ENCODE measurements at regions of chr12 and their contacts with region 1.

Region 1: GRCh38 chr12:24270965-24271364 is 321.5 kb upstream of the SOX5 start:
- H3K4me3 Mint-ChIP-seq: no peak overlapping the region
- H3K27ac Mint-ChIP-seq: no peak overlapping the region
- H3K4me1 Mint-ChIP-seq: no peaks in the 10 kb centered on the region
- H3K27me3 Mint-ChIP-seq: no peaks in the 10 kb centered on the region

Region 2: GRCh38 chr12:23648546-23648945 is 622.4 kb before region 1 on chr12:
- intact Hi-C with region 1: no loop called
- H3K4me3 Mint-ChIP-seq: no peak overlapping the region
- H3K27ac Mint-ChIP-seq: no peak overlapping the region
- H3K4me1 Mint-ChIP-seq: no peaks in the 10 kb centered on the region
- H3K27me3 Mint-ChIP-seq: no peaks in the 10 kb centered on the region

Region 3: DNA sequence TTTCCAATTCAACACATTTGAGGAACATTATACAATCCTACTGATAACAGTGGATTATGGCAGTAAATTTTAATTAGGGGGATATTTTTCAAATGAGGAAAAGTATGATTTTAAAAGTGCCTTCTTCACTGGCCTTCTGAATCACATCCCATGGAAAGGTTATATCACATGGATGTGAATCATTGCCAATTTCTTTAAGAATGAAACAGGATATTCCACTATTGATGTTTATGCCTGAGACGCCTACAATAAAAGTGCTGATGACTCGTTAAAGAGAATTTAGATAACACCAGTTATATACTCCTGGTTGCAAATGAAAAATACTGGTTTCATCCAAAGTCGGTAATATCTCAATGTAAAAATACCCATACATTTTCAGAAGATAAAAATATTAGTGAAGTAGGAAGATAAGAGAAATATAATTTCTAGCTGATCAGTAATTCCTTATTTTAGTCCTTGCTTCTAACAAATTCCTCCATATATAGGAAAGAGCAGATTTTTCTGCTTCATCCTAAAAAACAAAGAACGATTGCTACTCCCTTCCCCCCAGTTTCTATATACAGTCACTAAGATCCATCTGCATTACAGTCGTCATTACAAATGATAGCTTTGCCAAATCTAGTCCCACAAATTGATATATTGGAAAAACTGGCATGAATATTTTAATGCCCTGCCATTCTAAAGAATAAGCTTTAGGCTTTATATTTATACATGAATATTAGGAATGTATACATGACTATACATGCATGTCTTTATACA is 182.0 kb before region 1 on chr12:
- intact Hi-C with region 1: loop called (anchors 5 kb)
- H3K4me3 Mint-ChIP-seq: no peak overlapping the region
- H3K27ac Mint-ChIP-seq: no peak overlapping the region
- H3K4me1 Mint-ChIP-seq: no peaks in the 10 kb centered on the region
- H3K27me3 Mint-ChIP-seq: no peaks in the 10 kb centered on the region

Region 4: DNA sequence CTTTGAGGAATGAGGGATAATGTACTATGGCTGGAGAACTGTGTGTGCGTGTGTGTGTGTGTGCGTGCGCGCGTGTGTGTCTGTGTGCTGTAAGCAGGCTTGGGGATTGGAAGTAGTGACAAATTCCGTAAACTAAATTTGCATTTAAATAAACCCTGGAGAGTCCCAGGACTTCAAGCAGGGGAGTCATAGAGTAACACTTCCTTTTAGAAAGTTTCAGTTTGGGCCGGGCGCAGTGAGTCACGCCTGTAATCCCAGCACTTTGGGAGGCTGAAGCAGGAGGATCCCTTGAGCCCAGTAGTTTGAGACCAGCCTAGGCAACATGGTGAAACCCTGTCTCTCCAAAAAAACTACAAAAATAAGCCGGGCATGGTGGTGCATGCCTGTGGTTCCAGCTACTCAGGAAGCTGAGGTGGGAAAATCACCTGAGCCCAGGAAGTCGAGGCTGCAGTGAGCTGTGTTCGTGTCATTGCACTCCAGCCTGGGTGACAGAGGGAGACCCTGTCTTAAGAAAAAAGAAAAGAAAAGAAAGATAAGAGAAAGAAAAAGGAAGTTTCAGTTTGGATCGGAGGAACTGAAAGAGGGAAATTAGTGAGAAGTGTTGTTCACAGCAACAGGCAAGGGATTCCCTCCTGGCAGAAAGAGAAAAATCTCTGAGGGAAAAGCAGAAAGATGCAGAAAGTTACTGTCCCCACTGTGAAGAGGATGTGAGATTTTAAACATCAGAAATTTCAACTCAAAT is 98.8 kb before region 1 on chr12:
- intact Hi-C with region 1: no loop called
- H3K4me3 Mint-ChIP-seq: peak overlapping the region; percentile 59
- H3K27ac Mint-ChIP-seq: peak overlapping the region; percentile 83
- H3K4me1 Mint-ChIP-seq: peaks cover 31% of the 10 kb centered on the region
- H3K27me3 Mint-ChIP-seq: no peaks in the 10 kb centered on the region

Region 5: DNA sequence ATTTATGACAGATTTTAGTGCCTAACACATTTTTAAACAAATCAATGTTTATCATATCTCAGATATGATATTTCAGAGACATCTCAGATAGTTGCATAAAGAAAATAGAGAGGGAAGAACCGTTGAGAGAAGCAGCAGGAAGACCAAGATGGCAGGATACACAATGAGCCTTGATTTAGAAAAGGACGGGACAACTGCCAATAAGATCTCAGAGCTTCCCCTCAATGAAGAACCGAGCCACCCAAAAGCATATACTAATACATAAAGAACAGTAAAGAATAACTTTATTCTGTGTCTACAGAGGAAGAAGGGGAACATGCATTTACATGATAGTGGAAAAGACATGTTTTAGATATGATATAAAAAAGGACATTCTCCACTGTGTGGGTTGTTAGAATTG is 54.4 kb after region 1 on chr12:
- intact Hi-C with region 1: no loop called
- H3K4me3 Mint-ChIP-seq: no peak overlapping the region
- H3K27ac Mint-ChIP-seq: no peak overlapping the region
- H3K4me1 Mint-ChIP-seq: no peaks in the 10 kb centered on the region
- H3K27me3 Mint-ChIP-seq: no peaks in the 10 kb centered on the region

Region 6: DNA sequence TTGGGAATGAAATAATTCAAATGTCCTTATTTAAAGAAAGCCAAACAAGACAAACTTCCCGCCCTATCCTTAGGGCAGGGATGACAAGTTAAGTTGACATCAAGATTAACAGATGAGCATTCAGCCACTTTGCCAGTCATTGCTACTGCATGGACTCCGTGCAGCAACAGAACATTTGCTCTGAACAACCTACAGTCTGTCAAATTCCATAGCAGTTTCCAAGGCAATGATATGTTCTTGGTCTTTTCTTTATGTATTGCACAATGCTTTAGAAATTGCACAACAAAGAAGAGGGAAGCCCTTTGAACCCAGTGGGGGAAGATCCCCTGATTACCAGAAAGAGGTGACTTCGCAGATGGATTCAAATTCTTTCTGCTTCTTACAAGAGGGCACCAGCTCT is 408.2 kb after region 1 on chr12:
- intact Hi-C with region 1: no loop called
- H3K4me3 Mint-ChIP-seq: no peak overlapping the region
- H3K27ac Mint-ChIP-seq: no peak overlapping the region
- H3K4me1 Mint-ChIP-seq: peaks cover 7% of the 10 kb centered on the region
- H3K27me3 Mint-ChIP-seq: no peaks in the 10 kb centered on the region

Measured in dendritic cell treated with granulocyte-macrophage colony-stimulating factor and Interleukin-4, amounts not matched to agents 40 ng/mL and 50 ng/mL, for 4 days (primary cell).